HEK293T (cell line): ENCODE measurements at regions of chr14 and their contacts with region 1.

Region 1: DNA sequence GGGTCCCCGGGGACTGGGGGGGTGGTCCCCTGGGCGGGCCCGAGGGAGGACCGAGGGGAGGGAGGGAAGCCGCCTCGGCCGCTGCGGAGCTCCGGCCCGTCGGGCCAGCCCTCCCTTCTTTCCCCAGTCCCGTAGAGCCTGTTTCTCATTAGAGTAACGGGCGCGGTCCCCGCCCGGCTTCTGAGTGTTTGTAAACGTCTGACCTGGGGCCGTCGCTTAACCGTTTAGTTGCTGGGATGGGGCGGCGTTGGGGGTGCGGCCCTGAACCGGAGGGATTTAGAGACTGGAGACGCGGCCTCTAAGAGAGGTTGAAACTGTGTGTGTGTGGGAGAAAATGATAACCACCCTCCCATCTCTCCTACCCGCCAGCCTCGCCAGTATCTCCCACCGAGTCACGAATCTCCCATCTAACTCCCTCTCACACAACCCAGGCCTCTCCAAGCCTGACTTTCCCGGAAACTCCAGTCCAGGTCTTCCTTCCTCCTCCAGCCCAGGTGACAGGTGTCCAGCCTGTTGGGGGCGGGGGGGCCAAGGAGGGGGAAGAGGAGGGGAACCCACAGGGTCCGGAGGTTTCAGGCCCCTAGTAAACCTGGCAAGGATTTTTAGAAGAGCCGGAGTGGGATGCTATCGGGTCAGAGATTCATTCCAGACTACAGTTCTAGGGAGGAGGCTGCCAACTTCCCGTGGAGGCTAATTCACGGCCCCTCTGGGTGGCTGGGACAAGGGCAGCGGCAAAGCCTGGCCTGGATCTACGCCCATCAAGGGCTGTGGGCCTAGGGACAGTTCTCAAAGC is 1.1 kb upstream of the NFATC4 start:
- DNase-seq: peak; percentile 74

Region 2: DNA sequence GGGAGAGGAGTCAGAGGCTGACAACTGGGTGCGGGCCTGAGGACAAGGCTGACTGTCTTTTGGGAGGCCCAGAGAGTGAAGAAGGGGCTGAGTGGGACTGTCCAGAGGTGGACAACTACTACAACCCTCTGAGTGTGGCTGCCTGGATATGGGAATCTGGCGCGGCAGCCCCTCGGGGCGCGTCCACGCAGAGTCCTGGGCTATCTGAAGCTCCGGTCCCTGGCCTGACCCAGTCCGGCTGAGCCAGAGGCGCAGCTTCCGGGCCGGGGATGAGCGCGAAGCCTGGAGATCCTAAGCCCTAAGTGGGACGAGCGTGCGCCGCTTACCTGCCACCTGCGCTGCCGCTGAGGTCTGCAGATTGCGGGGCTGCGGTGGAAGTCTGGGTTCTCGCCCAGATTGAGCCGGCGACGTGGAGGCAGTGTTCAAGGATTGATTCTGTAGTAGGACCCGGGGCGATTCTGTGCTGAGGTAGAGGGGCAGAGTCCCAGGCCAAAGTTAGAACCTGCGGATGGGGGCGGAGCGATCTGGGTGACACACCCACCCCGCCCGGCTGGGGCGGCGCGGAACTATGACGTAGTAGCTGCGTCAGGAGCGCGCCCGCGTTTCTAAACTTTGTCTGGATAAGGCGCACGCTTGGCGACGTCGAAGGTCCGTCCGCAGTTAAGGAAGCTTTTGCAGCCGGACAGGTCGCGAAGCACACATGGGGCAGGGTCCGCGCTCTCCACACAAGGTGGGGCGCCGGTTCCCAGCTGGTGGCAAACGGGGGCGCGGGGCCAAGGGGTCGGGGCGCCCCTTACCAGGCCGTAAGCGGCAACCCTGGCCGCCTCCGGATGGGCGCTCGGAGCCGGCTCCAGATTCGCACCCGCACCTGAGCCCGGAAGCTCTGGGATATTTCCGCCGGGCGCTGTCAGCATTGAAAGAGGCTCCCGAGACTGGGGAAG is 67.4 kb before region 1 on chr14 and contains the starts of genes DHRS1 and NOP9:
- CTCF ChIA-PET with region 1: no interaction called
- POLR2A ChIA-PET with region 1: no interaction called
- DNase-seq: peak; percentile 95

Region 3: GRCh38 chr14:24332268-24332993 is 34.5 kb before region 1 on chr14:
- CTCF ChIA-PET with region 1: interaction called, 17 read pairs
- POLR2A ChIA-PET with region 1: interaction called, 4 read pairs
- DNase-seq: peak; percentile 71